Activated CD8-positive, alpha-beta T cell treated with anti-CD3 and anti-CD28 coated beads for 36 hours (primary cell): ENCODE measurements at regions of chr19 and their contacts with region 1.

Region 1: GRCh38 chr19:56121180-56122167 is at the start of gene ZNF787:
- DNase-seq: peak; percentile 97
- ATAC-seq: peak; percentile 92
- H3K4me3 Mint-ChIP-seq: peak within 1 kb of the TSS; percentile 87
- H3K27ac Mint-ChIP-seq: peak within 1 kb of the TSS; percentile 95
- H3K4me1 Mint-ChIP-seq: peaks cover 33% of the 10 kb centered on the region
- H3K27me3 Mint-ChIP-seq: no peaks in the 10 kb centered on the region
- CTCF ChIP-seq: no peak
- total RNA-seq, gene ZNF787: 24.2 to 25.8 TPM

Region 2: DNA sequence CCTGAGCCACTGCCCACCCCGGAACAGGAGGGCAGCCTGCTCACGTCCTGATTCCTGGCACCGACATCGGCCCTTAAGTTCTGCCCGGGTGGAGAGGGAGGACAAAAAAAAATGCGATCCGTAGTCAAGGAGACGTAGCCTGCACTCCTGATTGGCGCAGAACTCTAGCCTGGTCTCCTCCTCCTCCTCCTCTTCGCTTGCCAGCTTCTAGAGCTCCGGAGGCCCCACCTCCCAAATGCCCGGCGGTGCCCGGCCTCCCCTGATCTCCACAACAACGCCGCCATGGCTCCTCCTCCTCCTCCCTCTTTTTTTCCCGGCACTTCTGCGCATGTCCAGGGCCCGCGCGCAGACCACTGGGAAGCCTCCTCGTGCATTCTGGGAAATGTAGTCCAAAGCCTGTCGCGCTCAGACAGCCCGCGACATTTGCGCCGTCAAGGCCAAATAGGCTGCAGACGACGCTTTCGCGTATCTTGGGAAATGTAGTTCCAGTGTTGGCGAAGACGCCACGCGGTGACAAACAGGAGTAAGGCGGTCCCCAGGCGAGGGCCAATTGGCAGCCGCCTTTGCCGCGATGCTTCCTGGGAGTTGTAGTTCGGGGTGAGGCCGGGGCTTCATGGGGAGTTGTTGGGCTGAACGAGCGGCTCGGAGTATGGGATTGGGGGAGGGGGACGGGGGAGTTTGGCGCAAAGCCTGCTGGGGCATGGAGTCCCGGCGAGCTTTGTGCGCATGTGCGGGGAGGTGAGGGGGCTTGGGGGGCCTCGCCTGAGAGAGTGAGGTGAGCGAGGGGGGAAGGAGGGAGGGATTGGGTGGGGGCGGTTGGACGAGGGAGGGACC is 19.3 kb after region 1 on chr19 and contains the start of gene ZNF444:
- CTCF ChIA-PET with region 1: interaction called, 6 read pairs
- POLR2A ChIA-PET with region 1: interaction called, 9 read pairs
- intact Hi-C with region 1: loop called (anchors 2 kb)
- DNase-seq: peak; percentile 99
- ATAC-seq: peak; percentile 92
- H3K4me3 Mint-ChIP-seq: peak within 1 kb of the TSS; percentile 78
- H3K27ac Mint-ChIP-seq: peak within 1 kb of the TSS; percentile 95
- H3K4me1 Mint-ChIP-seq: peaks cover 34% of the 10 kb centered on the region
- H3K27me3 Mint-ChIP-seq: no peaks in the 10 kb centered on the region
- CTCF ChIP-seq: no peak
- total RNA-seq, gene ZNF444: 25.3 to 35.2 TPM